SK-N-SH (cell line): ENCODE measurements at regions of chr10 and their contacts with region 1.

Region 1: GRCh38 chr10:93376372-93377293 is 105.5 kb downstream of the MYOF start:
- DNase-seq: peak; percentile 72
- H3K4me3 ChIP-seq: no peak overlapping the region; a peak in 1 of 4 replicates
- H3K27ac ChIP-seq: peak overlapping the region; percentile 55 to 89
- H3K4me1 ChIP-seq: peaks cover 3 to 42% of the 10 kb centered on the region in 2 experiments
- H3K27me3 ChIP-seq: no peaks in the 10 kb centered on the region
- CTCF ChIP-seq: peak; percentile 95
- EP300 ChIP-seq: no peak
- RAD21 ChIP-seq: peak; percentile 98

Region 2: DNA sequence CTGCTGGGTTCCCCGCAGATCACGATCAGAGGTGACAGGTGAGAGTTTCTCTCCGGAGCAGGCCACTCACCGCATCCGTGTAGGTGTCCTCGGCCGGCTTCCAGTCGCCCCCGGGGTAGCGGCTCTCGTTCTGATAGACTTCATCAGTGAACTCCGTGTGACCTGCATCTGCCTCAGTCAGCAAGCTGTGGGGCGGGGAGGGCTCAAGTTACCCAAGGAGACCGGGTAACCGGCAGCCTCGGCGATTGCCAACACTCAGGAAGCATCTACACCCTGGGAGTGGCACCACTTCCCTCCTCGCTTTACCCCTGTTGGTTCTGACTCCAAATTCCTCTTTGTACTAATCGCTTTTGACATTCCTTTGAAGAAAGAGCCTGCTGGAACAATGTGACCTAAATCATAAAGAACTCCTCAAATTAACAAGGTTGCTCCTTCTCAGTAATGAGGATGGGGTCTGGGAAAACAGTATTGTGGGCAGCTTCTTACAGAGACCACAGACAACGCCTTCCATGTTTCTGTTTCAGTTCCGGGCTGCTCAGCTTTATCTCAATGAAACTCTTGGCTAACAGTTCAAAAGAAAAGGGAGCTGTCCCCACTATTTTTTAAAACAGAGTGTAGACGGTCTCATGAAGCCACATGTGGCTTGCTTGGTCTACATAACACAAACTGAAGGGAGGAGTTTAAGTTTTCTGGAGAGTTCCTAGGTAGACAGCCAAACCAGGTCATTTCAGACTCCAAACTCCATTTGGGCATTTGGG is 12.6 kb before region 1 on chr10:
- CTCF ChIA-PET with region 1: interaction called, 36 read pairs
- POLR2A ChIA-PET with region 1: no interaction called
- DNase-seq: no peak
- H3K4me3 ChIP-seq: no peak overlapping the region
- H3K27ac ChIP-seq: no peak overlapping the region
- H3K4me1 ChIP-seq: no peaks in the 10 kb centered on the region
- H3K27me3 ChIP-seq: no peaks in the 10 kb centered on the region
- CTCF ChIP-seq: no peak
- EP300 ChIP-seq: no peak
- RAD21 ChIP-seq: no peak

Region 3: DNA sequence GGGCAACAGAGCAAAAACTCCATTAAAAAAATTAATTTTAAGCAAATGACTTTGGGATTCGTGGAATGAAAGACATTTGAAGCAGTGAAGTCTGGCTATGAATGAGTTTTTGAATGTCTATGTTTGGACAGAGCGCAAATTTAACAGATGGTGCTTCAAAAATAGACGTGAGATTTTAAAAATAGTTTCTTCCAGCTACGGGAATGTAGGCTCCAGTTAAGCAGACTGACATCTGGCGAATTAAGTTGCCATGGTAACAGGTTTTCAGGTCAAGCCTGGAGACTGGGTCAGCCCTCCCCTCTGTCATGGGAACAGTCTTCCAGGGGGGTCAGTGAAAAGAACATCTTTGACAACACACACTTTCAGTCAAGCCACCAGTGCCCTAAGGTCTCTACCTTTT is 43.5 kb after region 1 on chr10:
- CTCF ChIA-PET with region 1: interaction called, 16 read pairs
- POLR2A ChIA-PET with region 1: no interaction called
- DNase-seq: peak; percentile 56
- H3K4me3 ChIP-seq: no peak overlapping the region
- H3K27ac ChIP-seq: peak overlapping the region; percentile 4 to 37; a peak in 1 of 4 replicates
- H3K4me1 ChIP-seq: peaks cover 0 to 5% of the 10 kb centered on the region in 2 experiments; a peak in 2 of 4 replicates
- H3K27me3 ChIP-seq: no peaks in the 10 kb centered on the region
- CTCF ChIP-seq: no peak
- EP300 ChIP-seq: no peak
- RAD21 ChIP-seq: no peak

Region 4: GRCh38 chr10:93458821-93459257 is 82.2 kb after region 1 on chr10:
- CTCF ChIA-PET with region 1: interaction called, 15 read pairs
- POLR2A ChIA-PET with region 1: no interaction called
- DNase-seq: no peak
- H3K4me3 ChIP-seq: no peak overlapping the region
- H3K27ac ChIP-seq: peak overlapping the region; percentile 86 to 99
- H3K4me1 ChIP-seq: peaks cover 7 to 56% of the 10 kb centered on the region in 2 experiments; a peak in 3 of 4 replicates
- H3K27me3 ChIP-seq: no peaks in the 10 kb centered on the region
- CTCF ChIP-seq: no peak
- EP300 ChIP-seq: peak; percentile 36 to 94; a peak in 3 of 4 replicates
- RAD21 ChIP-seq: no peak

Region 5: GRCh38 chr10:93496322-93497041 is 119.8 kb after region 1 on chr10 and contains the start of gene CEP55:
- CTCF ChIA-PET with region 1: interaction called, 515 read pairs
- POLR2A ChIA-PET with region 1: no interaction called
- DNase-seq: peak; percentile 97
- H3K4me3 ChIP-seq: peak within 1 kb of the TSS; percentile 81 to 82
- H3K27ac ChIP-seq: peak within 1 kb of the TSS; percentile 44 to 54
- H3K4me1 ChIP-seq: peaks cover 0 to 4% of the 10 kb centered on the region in 2 experiments; a peak in 3 of 4 replicates
- H3K27me3 ChIP-seq: no peaks in the 10 kb centered on the region
- CTCF ChIP-seq: no peak
- EP300 ChIP-seq: no peak
- RAD21 ChIP-seq: no peak
- polyA plus RNA-seq, gene CEP55: 9.8 and 11.3 TPM in 2 replicates

Region 6: DNA sequence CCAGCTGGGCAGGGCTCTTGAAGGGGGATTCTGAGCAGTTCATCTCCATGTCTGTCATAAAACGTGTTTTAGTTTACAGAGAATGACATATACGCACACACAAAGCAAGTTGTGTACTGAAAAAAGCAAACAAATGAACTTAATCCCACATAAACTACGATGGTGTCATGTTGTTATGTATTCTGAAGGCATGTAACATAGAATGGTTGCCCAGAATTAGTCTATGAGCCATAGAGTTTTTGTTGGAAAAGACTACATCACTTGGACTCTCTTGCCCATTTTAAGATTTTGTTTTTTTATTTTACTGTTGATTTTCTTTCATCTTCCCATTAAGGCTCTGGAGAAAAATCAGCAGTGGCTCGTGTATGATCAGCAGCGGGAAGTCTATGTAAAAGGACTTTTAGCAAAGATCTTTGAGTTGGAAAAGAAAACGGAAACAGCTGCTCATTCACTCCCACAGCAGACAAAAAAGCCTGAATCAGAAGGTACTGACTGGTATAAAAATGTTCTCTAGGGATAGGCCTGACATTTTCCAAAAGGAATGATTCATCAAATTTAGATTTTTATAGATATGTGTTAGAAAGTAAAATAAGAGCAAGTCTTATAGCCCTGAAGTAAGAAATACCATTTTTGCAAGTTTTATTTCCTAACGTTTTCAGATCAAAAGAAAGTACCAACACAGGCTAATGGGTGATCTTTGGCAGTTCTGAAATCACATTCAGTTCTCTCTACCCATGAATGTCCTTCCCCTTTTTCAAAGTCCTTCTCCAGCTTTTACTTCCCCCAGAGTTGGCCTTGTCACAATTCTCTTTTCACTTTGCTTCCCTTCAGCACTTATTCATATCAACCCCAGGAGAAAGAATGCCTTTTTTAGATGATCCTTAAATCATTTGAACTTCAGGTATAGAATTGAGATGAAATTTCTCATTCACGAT is 138.7 kb after region 1 on chr10:
- CTCF ChIA-PET with region 1: interaction called, 32 read pairs
- POLR2A ChIA-PET with region 1: no interaction called
- DNase-seq: no peak
- H3K4me3 ChIP-seq: no peak overlapping the region
- H3K27ac ChIP-seq: peak overlapping the region in 1 of 2 experiments; percentile 66; a peak in 2 of 4 replicates
- H3K4me1 ChIP-seq: peaks cover 0 to 21% of the 10 kb centered on the region in 2 experiments; a peak in 2 of 4 replicates
- H3K27me3 ChIP-seq: no peaks in the 10 kb centered on the region
- CTCF ChIP-seq: no peak
- EP300 ChIP-seq: no peak
- RAD21 ChIP-seq: no peak

Region 7: DNA sequence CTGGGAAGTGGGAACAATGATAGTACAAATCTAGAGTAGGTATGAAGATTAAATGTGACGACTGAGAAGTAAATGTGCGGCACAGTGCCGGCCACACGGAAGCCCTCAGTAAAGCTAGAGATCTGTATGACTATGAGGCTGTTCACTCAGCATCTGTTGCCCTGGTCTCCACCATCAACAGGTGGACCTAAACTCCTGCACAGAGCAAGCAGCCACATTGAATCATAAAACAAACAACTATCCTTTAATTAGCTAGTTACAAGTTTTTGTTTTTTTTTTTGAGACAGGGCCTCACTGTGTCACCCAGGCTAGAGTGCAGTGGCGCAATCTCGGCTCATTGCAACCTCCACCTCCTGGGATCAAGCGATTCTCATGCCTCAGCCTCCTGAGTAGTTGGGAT is 207.8 kb after region 1 on chr10:
- CTCF ChIA-PET with region 1: no interaction called
- POLR2A ChIA-PET with region 1: no interaction called
- DNase-seq: no peak
- H3K4me3 ChIP-seq: no peak overlapping the region
- H3K27ac ChIP-seq: no peak overlapping the region
- H3K4me1 ChIP-seq: no peaks in the 10 kb centered on the region
- H3K27me3 ChIP-seq: no peaks in the 10 kb centered on the region; the same call in 1 of the 2 replicates
- CTCF ChIP-seq: no peak
- EP300 ChIP-seq: no peak
- RAD21 ChIP-seq: no peak